Ovary (tissue), 10 donors: ENCODE measurements at regions of chr9 and their contacts with region 1.

Region 1: GRCh38 chr9:106862825-106863720 is at the start of gene ZNF462:
- DNase-seq: peak; percentile 57 to 70 (median 65)
- H3K4me3 ChIP-seq: peak within 1 kb of the TSS; percentile 58
- H3K27ac ChIP-seq: peak within 1 kb of the TSS; percentile 84 to 93
- H3K4me1 ChIP-seq: peaks cover 3% of the 10 kb centered on the region
- H3K27me3 ChIP-seq: no peaks in the 10 kb centered on the region
- CTCF ChIP-seq: peak in 2 of 3 donors; percentile 93 to 100
- EP300 ChIP-seq: no peak
- POLR2A ChIP-seq: peak; percentile 35
- total RNA-seq, gene ZNF462: 22.1 to 87.6 (median 54.4) TPM

Region 2: GRCh38 chr9:106921341-106921899 is 58.3 kb after region 1 on chr9:
- intact Hi-C with region 1: loop called in 3 of 4 experiments (anchors 5 to 10 kb)
- DNase-seq: peak; percentile 54 to 76 (median 66)
- H3K4me3 ChIP-seq: no peak overlapping the region
- H3K27ac ChIP-seq: peak overlapping the region in 1 of 2 donors; percentile 92
- H3K4me1 ChIP-seq: peaks cover 15% of the 10 kb centered on the region
- H3K27me3 ChIP-seq: no peaks in the 10 kb centered on the region
- CTCF ChIP-seq: no peak
- EP300 ChIP-seq: no peak
- POLR2A ChIP-seq: no peak

Region 3: DNA sequence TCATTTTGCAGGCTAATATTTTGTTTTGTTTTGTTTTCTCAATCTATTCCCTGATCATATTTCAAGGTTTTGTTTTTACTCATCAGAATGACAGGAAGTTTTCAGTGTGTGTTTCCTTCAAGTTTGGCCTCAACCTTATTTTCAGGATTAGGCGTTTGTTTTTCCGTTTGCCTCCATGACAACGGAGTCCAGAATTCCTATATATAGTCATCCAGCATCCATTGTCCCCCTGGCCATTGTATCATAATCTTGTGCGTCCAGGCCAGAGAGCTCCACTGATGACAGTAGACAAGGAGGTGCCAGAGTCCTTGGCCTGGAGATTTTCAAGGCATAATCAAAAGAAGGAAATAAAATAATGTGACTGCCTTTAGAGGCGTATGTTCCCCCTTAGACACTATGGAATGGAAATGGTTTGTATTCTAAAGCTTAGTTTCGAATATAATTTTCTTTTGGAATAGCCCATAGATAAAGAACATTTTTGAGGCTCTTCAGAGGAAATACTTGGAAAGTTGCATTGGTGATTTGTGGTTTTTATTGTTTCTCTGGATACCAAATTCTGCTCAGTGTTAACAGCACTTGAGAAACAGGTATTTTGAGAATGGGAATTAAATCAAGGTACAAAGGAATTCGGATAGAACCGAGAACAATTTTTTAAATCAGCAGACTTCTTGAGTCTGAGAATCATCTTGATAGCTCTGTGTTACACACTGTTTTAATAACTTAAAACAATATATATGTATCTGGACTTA is 99.7 kb after region 1 on chr9:
- intact Hi-C with region 1: no loop called
- DNase-seq: no peak
- H3K4me3 ChIP-seq: no peak overlapping the region
- H3K27ac ChIP-seq: no peak overlapping the region
- H3K4me1 ChIP-seq: no peaks in the 10 kb centered on the region
- H3K27me3 ChIP-seq: no peaks in the 10 kb centered on the region
- CTCF ChIP-seq: no peak
- EP300 ChIP-seq: no peak
- POLR2A ChIP-seq: no peak

Region 4: DNA sequence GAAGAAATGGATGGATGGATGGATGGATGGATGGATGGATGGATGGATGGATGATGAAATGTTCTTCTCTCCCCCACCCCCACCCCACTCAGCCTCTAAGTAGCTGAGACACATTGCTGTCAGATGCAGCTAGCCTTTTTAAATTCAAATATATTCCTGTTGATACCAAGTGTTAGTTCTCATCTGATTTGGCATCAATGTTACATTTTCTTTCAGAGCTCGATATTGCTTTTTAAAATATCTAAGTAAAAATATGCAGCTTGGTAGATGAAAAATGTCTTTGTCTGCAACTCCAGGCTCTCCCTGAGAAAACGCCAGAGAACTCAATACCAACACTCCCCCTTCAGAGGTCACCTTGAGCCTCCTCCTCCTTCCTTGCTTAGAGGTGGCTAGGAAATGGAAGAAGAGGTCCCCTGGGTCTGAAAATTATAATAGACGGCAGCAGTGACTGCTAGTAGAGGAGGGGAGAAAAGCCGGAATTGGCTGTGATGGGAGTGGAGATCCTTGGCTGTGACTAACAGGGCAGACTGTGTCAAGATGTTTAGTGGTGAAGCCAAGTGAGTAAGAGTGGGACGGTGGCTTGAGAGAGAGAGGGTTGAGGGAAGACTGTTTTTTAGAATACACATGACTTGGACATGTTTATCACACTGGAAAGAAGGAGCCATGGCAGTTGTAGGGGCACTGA is 155.9 kb after region 1 on chr9:
- intact Hi-C with region 1: loop called in 1 of 4 experiments (anchors 10 kb)
- DNase-seq: no peak
- H3K4me3 ChIP-seq: no peak overlapping the region
- H3K27ac ChIP-seq: no peak overlapping the region
- H3K4me1 ChIP-seq: no peaks in the 10 kb centered on the region
- H3K27me3 ChIP-seq: no peaks in the 10 kb centered on the region
- CTCF ChIP-seq: no peak
- EP300 ChIP-seq: no peak
- POLR2A ChIP-seq: no peak

Region 5: DNA sequence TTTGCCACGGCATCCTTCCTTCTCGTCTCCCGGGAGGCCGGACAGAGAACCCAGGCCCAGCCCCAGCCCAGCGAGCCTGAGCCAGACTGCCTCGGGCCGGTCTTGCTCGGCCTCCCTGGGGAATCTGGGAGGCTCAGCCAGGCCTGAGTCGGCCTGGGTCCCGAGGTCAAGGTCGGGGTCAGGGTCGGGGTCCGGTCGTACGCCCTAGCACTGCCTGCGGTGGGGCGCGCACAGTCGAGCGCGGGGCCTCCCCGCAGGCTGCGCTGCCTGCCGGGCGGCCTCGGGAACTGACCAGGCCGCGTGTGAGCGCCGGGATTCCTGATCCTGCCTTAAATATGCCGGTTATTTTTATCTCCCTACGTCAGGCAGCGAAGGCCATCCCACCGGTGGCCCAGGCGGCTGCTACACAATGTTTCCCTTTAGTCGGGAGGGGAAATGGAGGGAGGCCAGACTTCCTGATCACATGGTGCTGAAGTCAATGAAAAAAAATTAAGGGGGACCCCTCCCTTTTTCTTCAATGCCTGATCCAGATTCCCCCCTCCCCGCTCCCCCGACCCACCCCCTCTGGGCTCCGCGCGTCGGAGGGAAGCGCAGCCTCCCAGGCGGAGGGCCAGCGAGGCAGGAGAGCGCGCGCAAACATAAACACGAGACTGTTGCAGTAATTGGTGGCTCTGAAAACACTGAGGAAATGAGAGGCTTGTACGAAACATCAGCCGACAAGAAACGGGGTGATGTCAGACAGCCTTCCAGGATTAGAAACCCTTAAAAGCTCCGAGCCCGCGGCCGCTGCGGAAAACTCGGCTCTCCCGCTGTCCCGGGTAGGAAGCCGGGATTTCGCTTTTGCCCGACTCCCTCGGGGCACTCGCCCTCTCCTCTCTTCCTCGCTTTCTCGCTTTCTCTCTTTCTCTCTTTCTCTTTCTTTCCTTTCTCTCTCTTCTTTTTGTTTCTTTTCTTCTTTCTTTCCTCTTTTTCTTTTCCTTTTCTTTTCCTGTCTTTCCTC is 774.6 kb after region 1 on chr9:
- intact Hi-C with region 1: loop called in 1 of 4 experiments (anchors 5 kb)
- DNase-seq: peak; percentile 94 to 98 (median 96)
- H3K4me3 ChIP-seq: peak overlapping the region; percentile 40
- H3K27ac ChIP-seq: peak overlapping the region; percentile 98 to 100
- H3K4me1 ChIP-seq: peaks cover 12% of the 10 kb centered on the region
- H3K27me3 ChIP-seq: no peaks in the 10 kb centered on the region
- CTCF ChIP-seq: peak in 2 of 3 donors; percentile 66 to 69
- EP300 ChIP-seq: peak; percentile 81
- POLR2A ChIP-seq: peak; percentile 99